GM12878 (cell line): ENCODE measurements at regions of chr18 and their contacts with region 1.

Region 1: GRCh38 chr18:46173393-46174341 is 69.5 kb downstream of the HAUS1 start:
- DNase-seq: peak; percentile 48
- ATAC-seq: peak; percentile 89
- H3K4me3 ChIP-seq: peak overlapping the region; percentile 91
- H3K27ac ChIP-seq: peak overlapping the region; percentile 88
- H3K4me1 ChIP-seq: peaks cover 8% of the 10 kb centered on the region
- H3K27me3 ChIP-seq: no peaks in the 10 kb centered on the region
- CTCF ChIP-seq: peak; percentile 79 to 98 (median 95)
- EP300 ChIP-seq: peak in 1 of 2 experiments; percentile 18; a peak in 1 of 4 replicates
- POLR2A ChIP-seq: peak; percentile 95
- RAD21 ChIP-seq: peak; percentile 79

Region 2: GRCh38 chr18:45562567-45563479 is 610.8 kb before region 1 on chr18:
- CTCF ChIA-PET with region 1: no interaction called
- POLR2A ChIA-PET with region 1: no interaction called
- RAD21 ChIA-PET with region 1: no interaction called
- SMC1A ChIA-PET with region 1: no interaction called
- in situ Hi-C with region 1: no loop called
- intact Hi-C with region 1: no loop called
- DNase-seq: no peak
- ATAC-seq: no peak
- H3K4me3 ChIP-seq: no peak overlapping the region
- H3K27ac ChIP-seq: no peak overlapping the region
- H3K4me1 ChIP-seq: no peaks in the 10 kb centered on the region
- H3K27me3 ChIP-seq: 0 out of 4 replicates have a peak, but pooled peaks cover 0 to 2% of the 10 kb centered on the region in 2 experiments
- CTCF ChIP-seq: no peak
- EP300 ChIP-seq: no peak
- POLR2A ChIP-seq: no peak
- RAD21 ChIP-seq: no peak

Region 3: DNA sequence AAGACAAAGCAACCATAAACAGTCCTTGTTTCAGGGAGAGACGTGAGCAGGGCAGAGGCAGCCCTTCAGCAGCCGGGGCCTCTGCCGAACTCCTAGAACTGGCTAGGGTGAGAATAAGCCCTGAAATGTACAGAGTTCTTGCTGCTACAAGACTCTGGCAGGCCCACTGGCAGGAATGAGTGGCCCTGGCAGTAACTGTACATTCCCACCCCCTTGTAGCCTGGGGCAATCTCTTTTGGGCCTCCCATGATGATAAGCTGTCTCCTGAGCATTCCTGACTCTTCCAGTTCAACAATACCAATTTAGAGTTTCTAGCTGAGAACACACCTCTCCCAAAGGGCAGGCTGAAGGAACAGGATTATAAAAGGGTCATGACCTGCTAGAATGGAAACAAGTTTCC is 15.2 kb before region 1 on chr18:
- CTCF ChIA-PET with region 1: interaction called, 24 read pairs
- POLR2A ChIA-PET with region 1: no interaction called
- RAD21 ChIA-PET with region 1: interaction called, 4 read pairs
- SMC1A ChIA-PET with region 1: interaction called, 5 read pairs
- in situ Hi-C with region 1: no loop called
- intact Hi-C with region 1: no loop called
- DNase-seq: no peak
- ATAC-seq: no peak
- H3K4me3 ChIP-seq: no peak overlapping the region
- H3K27ac ChIP-seq: no peak overlapping the region
- H3K4me1 ChIP-seq: peaks cover 8% of the 10 kb centered on the region; the same call in 1 of the 2 replicates
- H3K27me3 ChIP-seq: no peaks in the 10 kb centered on the region
- CTCF ChIP-seq: no peak
- EP300 ChIP-seq: no peak
- POLR2A ChIP-seq: no peak
- RAD21 ChIP-seq: no peak

Region 4: GRCh38 chr18:46196627-46197243 is 23.1 kb after region 1 on chr18:
- CTCF ChIA-PET with region 1: interaction called, 14 read pairs
- POLR2A ChIA-PET with region 1: interaction called, 3 read pairs
- RAD21 ChIA-PET with region 1: interaction called, 12 read pairs
- SMC1A ChIA-PET with region 1: interaction called, 4 read pairs
- in situ Hi-C with region 1: no loop called
- intact Hi-C with region 1: no loop called
- DNase-seq: no peak
- ATAC-seq: no peak
- H3K4me3 ChIP-seq: no peak overlapping the region
- H3K27ac ChIP-seq: no peak overlapping the region
- H3K4me1 ChIP-seq: peaks cover 14% of the 10 kb centered on the region
- H3K27me3 ChIP-seq: no peaks in the 10 kb centered on the region
- CTCF ChIP-seq: no peak
- EP300 ChIP-seq: no peak
- POLR2A ChIP-seq: no peak
- RAD21 ChIP-seq: no peak

Region 5: DNA sequence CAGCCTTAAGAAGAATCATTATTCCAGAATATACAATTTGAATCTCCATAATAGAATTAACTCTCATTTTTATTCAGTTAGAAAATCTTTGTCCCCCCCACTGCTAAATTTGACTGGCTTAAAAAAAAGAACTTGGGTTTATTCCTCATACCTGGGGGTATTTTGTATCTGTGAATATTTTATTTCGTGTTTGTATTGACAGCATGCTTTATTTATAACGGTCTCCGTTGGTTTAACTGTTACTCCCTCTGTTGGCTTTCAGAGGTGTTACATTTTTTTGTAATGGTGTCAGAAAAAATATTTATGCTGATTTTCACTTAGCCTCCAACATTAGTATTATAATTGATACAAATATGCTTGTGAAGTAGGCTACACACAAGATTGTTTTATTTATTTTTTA is 39.6 kb after region 1 on chr18:
- CTCF ChIA-PET with region 1: interaction called, 51 read pairs
- POLR2A ChIA-PET with region 1: no interaction called
- RAD21 ChIA-PET with region 1: interaction called, 12 read pairs
- SMC1A ChIA-PET with region 1: interaction called, 11 read pairs
- in situ Hi-C with region 1: no loop called
- intact Hi-C with region 1: loop called (anchors 1 kb)
- DNase-seq: no peak
- ATAC-seq: peak; percentile 59; the same call in 2 of the 3 replicates
- H3K4me3 ChIP-seq: no peak overlapping the region
- H3K27ac ChIP-seq: no peak overlapping the region
- H3K4me1 ChIP-seq: peaks cover 12% of the 10 kb centered on the region
- H3K27me3 ChIP-seq: no peaks in the 10 kb centered on the region
- CTCF ChIP-seq: peak; percentile 38 to 46 (median 39); a peak in 5 of 6 replicates
- EP300 ChIP-seq: no peak
- POLR2A ChIP-seq: no peak
- RAD21 ChIP-seq: peak; percentile 67

Region 6: DNA sequence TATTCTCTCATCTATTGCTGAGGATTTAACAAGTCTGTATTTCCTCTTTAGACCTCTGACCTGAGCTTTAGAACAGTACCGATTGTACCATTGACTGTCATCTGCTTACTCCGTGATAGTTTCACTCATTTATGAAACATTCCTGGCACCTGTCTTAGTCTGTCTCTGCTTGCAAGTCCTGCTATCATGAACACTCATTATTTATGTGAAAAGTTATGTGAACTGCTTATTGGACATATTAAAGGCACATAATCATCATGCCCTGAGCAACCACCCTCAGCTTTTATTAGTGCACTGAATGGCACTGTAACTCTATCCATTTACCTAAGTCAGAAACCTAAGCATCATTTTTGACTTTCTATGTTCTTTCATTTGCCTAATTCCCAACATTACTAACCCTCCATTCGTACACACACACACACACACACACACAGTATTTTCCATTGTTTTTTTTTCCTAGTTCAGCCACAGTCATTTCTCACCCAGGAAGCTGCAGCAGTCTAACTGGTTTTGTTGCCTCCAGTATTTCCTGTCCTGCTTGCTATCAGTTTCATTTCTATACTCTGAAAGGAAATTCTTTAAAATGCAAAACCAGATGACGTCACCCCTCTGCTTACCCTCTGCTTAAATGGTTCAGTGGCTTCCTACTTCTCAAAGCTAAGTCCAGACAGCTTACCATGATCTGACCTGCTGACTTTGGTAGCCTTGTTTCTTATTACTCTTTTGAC is 76.6 kb after region 1 on chr18:
- CTCF ChIA-PET with region 1: interaction called, 34 read pairs
- POLR2A ChIA-PET with region 1: interaction called, 4 read pairs
- RAD21 ChIA-PET with region 1: interaction called, 11 read pairs
- SMC1A ChIA-PET with region 1: interaction called, 5 read pairs
- in situ Hi-C with region 1: no loop called
- intact Hi-C with region 1: loop called (anchors 2 kb)
- DNase-seq: peak; percentile 92
- ATAC-seq: peak; percentile 98
- H3K4me3 ChIP-seq: peak overlapping the region; percentile 41; the same call in 1 of the 2 replicates
- H3K27ac ChIP-seq: peak overlapping the region; percentile 75
- H3K4me1 ChIP-seq: peaks cover 22% of the 10 kb centered on the region
- H3K27me3 ChIP-seq: no peaks in the 10 kb centered on the region
- CTCF ChIP-seq: no peak
- EP300 ChIP-seq: peak; percentile 60 to 73; a peak in 2 of 4 replicates
- POLR2A ChIP-seq: no peak
- RAD21 ChIP-seq: no peak

Region 7: GRCh38 chr18:46481048-46481846 is 307.6 kb after region 1 on chr18:
- CTCF ChIA-PET with region 1: interaction called, 7 read pairs
- POLR2A ChIA-PET with region 1: interaction called, 5 read pairs
- RAD21 ChIA-PET with region 1: interaction called, 3 read pairs
- SMC1A ChIA-PET with region 1: no interaction called
- in situ Hi-C with region 1: no loop called
- intact Hi-C with region 1: loop called (anchors 10 kb)
- DNase-seq: no peak
- ATAC-seq: peak; percentile 77
- H3K4me3 ChIP-seq: no peak overlapping the region
- H3K27ac ChIP-seq: no peak overlapping the region
- H3K4me1 ChIP-seq: no peaks in the 10 kb centered on the region
- H3K27me3 ChIP-seq: peaks cover 0 to 6% of the 10 kb centered on the region in 2 experiments; a peak in 2 of 4 replicates
- CTCF ChIP-seq: peak; percentile 54 to 76 (median 69)
- EP300 ChIP-seq: no peak
- POLR2A ChIP-seq: no peak
- RAD21 ChIP-seq: peak; percentile 67